KBM-7 (cell line): ENCODE measurements at regions of chr7 and their contacts with region 1.

Region 1: DNA sequence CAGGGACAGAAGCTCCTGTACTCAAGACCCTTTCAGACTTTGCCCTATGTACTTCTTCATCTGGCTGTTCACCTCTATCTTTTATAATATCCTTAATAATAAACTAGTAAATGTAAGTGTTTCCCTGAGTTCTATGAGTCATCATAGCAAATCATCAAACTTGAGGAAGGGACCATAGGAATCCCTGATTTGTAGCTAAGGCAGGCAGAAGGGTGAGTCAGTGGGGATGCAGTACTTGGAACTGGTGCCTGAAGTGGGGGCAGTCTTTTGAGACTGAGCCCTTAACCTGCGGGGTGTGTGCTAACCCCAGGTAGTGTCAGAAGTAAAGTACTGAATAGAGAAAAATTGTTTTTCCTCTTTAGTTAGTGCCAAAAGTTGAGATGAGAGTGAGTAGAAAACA is 6.2 kb upstream of the TMEM243 start:
- DNase-seq: no peak

Region 2: DNA sequence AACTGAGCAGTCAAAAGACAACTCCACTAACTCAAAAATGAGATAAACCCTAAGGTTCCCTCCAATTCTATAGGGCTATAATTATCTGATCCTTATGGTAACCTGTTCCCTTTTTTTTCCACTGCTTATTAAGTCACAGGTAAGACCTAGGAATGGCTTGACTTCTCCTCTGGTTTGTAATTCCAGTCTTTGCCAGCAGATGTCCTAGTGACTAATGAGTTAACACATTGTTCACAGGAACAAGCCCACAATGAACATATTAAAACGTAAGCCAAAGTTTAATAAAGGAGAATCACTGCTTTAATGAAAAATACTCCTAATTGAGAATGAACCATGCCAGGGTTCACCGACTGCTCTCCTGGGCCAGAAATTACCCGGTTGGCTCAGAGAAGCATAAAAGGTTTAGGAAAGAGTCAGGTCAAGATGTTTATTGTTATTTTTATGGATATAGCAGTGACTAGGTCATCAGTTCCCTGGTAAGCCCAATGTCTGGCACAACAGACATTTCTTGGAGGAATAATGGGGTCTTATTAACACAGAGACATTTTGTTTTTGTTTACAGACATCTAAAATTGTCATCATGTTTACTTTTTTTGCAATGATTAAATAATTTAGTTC is 286.4 kb before region 1 on chr7:
- in situ Hi-C with region 1: loop called (anchors 25 kb)
- DNase-seq: peak; percentile 58